ENCODE measurements at regions of chr10 and their contacts with region 1.

Region 1: GRCh38 chr10:103612462-103613365 is 119.2 kb downstream of the NEURL1 start:
- DNase-seq: peak; percentile 31
- H3K4me3 ChIP-seq: no peak overlapping the region
- CTCF ChIP-seq: no peak

Region 2: DNA sequence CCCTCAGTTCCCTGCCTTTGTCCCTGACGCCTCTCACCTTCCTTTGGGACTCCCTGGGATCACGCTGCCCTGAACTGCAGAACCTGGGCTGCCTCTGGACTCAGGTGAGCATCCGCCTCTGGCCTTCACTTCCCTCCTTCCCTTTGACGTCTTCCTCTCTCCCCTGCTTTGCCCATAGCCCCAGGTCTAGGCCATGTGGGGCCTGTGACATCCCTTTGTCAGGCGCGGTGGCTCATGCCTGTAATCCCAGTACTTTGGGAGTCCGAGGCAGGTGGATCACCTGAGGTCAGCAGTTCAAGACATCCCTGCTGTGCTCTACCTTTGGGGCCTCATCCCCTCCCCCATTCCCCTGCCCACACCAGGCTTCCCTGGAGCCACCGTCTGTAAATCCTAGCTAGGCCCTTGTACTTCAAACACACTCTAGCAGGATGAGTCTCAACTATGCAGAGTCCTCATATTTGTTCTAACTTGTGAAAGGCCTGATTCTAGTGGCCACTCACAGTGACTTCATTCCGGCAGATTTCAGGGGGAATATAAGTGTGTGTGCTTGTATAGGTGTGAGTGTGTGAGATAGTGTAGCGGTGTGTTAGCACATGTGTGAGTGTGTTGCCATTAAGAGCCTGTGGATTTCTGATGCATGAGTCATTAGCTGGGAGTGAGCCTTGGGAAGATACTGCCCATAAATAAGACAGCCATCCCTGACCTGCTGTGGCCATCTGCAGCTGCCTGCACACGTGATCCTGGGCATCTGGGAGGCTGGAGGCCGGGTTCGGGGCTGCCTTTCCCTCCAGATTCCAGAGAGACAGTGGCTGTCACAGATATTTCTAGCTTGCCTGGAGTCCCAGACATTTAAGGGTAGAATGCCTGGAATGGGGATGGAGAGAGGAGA is 121.0 kb before region 1 on chr10:
- CTCF ChIA-PET with region 1: no interaction called
- POLR2A ChIA-PET with region 1: no interaction called
- DNase-seq: peak; percentile 92
- H3K4me3 ChIP-seq: no peak overlapping the region
- CTCF ChIP-seq: no peak

Region 3: DNA sequence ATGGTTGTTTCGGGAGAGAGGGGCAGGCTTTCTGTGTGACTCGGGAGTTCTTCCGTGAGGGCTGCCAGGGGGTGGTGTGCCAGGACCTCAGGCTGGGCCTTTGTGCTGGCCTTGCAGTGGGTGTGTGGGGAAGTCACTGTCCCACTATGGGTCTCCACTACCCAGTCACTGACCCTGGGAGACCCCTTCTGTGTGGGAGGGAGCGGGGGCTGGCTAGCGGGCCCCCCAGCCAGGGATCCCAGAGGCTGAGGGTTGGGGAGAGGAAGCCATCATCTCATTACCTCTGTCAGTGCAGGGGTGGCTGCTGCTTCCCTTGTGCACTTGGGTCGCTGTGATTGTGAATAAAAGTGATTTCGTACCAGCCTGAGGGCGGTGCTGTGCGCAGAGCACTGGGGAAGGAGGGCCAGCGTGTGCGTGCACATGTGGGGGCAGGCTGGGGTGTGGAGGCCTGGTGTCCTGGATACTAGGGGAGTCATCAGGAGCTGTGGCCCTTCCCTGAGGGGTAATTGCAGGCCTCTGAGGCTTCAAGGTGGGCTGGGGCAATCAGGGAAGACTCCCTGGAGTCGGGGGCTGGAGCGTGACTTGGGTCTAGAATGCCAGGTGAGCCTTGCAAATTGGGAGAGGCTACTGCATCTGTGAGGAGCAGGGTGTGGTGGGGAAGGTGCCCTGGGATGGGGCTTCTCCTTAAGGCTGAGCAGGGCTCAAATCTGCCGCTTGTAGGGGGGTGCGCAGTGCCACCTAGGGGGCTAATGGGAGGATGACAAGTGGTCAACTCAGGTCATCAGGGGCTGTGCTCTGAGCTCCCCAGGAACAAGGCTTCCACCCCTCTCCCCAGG is 20.3 kb before region 1 on chr10:
- CTCF ChIA-PET with region 1: interaction called, 11 read pairs
- POLR2A ChIA-PET with region 1: no interaction called
- DNase-seq: no peak
- H3K4me3 ChIP-seq: no peak overlapping the region
- CTCF ChIP-seq: peak; percentile 80

Measured in AG04449 (cell line).